Calu3 (cell line): ENCODE measurements at regions of chr2 and their contacts with region 1.

Region 1: GRCh38 chr2:83782122-83782521 is 677.0 kb downstream of the SUCLG1 start:
- DNase-seq: no peak
- H3K4me3 Mint-ChIP-seq: no peak overlapping the region
- H3K27ac Mint-ChIP-seq: no peak overlapping the region
- H3K4me1 Mint-ChIP-seq: no peaks in the 10 kb centered on the region
- H3K27me3 Mint-ChIP-seq: no peaks in the 10 kb centered on the region
- CTCF ChIP-seq: no peak

Region 2: DNA sequence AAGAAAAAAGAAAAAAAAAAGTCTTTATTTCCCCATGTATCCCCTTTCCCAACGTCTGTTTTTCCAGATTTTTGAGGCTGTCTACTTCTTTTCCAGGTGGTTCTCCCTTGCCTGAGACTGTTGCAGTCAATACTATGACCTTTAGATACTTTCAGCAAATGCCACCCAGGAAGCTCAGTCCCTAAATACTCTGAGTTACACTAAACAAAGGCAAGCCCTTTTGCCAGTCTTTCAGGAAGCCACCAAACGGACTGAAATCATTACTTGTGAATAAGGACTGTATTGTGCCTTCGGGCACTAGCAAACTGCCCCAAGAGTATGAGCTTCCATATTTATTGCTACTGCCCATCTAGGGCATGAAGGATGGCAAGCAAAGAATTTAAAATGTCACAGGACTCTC is 55.7 kb after region 1 on chr2:
- CTCF ChIA-PET with region 1: no interaction called
- intact Hi-C with region 1: no loop called
- DNase-seq: no peak
- H3K4me3 Mint-ChIP-seq: no peak overlapping the region
- H3K27ac Mint-ChIP-seq: no peak overlapping the region
- H3K4me1 Mint-ChIP-seq: no peaks in the 10 kb centered on the region
- H3K27me3 Mint-ChIP-seq: no peaks in the 10 kb centered on the region
- CTCF ChIP-seq: no peak

Region 3: GRCh38 chr2:84077492-84077891 is 295.4 kb after region 1 on chr2:
- CTCF ChIA-PET with region 1: no interaction called
- intact Hi-C with region 1: loop called (anchors 5 kb)
- DNase-seq: peak; percentile 48
- H3K4me3 Mint-ChIP-seq: no peak overlapping the region
- H3K27ac Mint-ChIP-seq: no peak overlapping the region
- H3K4me1 Mint-ChIP-seq: no peaks in the 10 kb centered on the region
- H3K27me3 Mint-ChIP-seq: peaks cover 13% of the 10 kb centered on the region
- CTCF ChIP-seq: peak; percentile 24